ENCODE measurements at regions of chr19 and their contacts with region 1.

Region 1: DNA sequence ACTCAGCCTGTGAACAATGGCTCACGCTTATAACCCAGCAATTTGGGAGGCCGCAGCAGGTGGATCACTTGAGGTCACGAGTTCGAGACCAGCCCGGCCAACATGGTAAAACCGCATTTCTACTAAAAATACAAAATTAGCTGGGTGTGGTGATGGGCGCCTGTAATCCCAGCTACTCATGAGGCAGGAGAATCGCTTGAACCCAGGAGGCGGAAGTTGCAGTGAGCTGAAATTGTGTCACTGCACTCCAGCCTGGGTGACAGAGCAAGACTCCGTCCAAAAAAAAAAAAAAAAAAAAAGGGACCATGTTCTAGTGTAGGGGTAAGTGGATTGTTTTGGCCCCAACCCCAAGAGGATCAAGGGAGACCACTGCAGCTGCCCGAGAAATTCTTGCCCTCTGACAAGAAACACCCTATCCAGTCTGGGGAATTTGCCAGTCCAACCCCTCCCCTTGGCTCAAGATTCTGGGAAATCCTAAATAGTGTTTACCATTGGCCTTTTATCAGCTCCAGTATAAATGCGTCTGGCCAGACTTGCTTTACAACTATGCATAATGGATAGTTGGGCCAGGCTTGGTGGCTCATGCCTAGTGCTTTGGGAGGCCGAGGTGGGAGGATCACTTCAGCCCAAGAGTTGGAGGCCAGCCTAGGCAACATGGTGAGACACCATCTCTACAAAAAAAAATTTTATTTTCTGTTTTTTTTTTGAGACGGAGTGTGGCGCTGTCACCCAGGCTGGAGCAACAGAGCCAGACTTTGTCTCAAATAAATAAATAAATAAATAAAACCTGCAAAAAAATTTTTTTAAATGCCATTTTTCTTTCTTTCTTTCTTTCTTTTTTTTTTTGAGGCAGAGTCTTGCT is 5.1 kb upstream of the DHDH start:
- DNase-seq: no peak
- H3K4me3 ChIP-seq: no peak overlapping the region
- H3K27ac ChIP-seq: no peak overlapping the region
- H3K4me1 ChIP-seq: peaks cover 6% of the 10 kb centered on the region
- H3K27me3 ChIP-seq: no peaks in the 10 kb centered on the region
- CTCF ChIP-seq: no peak

Region 2: GRCh38 chr19:49064768-49065611 is 136.6 kb after region 1 on chr19 and contains the start of gene NTF4:
- CTCF ChIA-PET with region 1: no interaction called
- POLR2A ChIA-PET with region 1: no interaction called
- intact Hi-C with region 1: no loop called
- DNase-seq: peak in 1 of 2 experiments; percentile 75
- H3K4me3 ChIP-seq: peak within 1 kb of the TSS; percentile 35; the same call in 1 of the 2 replicates
- H3K27ac ChIP-seq: no peak within 1 kb of the TSS
- H3K4me1 ChIP-seq: peaks cover 11% of the 10 kb centered on the region; the same call in 1 of the 2 replicates
- H3K27me3 ChIP-seq: peaks cover 17% of the 10 kb centered on the region
- CTCF ChIP-seq: no peak
- total RNA-seq, gene NTF4: 14.0 and 18.6 TPM in 2 replicates

Region 3: DNA sequence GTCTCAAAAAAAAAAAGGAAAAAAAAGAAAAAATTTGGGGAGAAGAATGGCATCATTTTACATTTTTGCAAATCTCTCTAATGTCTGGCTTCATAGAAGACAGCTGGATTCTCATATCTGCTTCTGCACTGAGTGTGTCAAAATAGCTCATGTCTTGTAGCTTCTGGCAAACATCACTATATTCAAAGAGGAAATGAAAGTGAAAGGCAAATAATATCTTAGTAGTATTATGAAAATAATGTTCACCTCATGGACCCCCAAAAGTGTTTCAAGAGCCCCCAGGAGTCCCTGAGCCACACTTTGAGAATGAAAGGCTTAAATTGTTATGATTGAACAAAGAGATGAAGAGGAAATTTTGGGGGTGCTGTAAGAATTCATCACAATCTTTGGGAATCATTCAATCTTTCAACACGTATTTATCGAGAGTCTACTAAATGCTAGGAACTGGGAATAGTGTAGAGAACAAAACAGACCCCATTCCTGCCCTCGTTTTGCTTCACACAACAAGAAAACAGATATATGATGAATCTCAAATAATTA is 397.8 kb after region 1 on chr19:
- CTCF ChIA-PET with region 1: interaction called, 12 read pairs
- POLR2A ChIA-PET with region 1: no interaction called
- intact Hi-C with region 1: no loop called
- DNase-seq: no peak
- H3K4me3 ChIP-seq: no peak overlapping the region
- H3K27ac ChIP-seq: no peak overlapping the region
- H3K4me1 ChIP-seq: no peaks in the 10 kb centered on the region
- H3K27me3 ChIP-seq: peaks cover 11% of the 10 kb centered on the region; the same call in 1 of the 2 replicates
- CTCF ChIP-seq: no peak